Activated naive CD4-positive, alpha-beta T cell treated with anti-CD3 and anti-CD28 coated beads, Interleukin-2, amount 10 ng/mL, durations not matched to agents 7 days and 5 days (primary cell): ENCODE measurements at regions of chr11 and their contacts with region 1.

Region 1: DNA sequence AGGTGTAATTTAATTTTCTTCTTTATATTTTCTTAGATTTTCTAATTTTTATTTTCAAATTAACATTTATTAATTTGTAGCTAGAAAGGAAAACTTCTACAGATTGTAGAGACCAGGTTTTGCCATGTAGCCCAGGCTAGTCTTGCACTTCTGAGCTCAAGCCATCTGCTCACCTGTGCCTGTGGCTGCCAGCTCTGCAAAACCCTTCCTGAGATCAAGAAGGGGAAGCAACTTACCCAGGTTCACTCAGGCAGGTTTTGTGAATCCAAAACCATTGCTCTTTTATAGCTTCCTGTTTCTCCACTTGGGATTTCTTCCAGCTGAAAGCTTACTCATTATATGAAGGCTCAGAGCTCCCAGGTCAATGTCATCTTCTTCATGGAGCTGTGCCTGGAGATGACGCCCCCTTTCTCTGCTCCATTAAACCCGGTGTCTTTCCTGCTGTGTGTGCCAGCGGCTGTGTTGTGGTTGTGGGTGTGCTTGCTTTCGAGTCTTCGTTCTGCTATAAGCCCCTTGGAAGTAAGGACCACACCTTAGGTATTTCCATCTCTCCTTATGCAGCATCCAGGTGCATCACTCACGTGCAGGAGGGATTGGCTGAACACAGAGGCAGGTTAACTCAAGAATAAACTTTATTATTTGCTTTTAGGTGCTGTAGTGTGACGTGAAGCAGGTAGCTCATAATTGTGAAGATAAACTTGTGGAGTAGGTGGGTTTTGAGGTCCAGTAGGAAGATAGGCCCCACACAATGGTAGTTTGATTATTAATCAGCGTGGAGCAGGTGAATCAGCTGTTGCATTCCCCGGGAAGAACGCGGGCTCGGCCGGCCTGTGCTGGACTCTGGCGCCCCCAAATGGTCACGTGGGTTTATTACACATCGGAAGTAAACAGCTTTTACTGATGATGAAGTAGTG is 42.2 kb upstream of the INCENP start:
- DNase-seq: peak; percentile 84
- H3K4me3 Mint-ChIP-seq: no peak overlapping the region
- H3K27ac Mint-ChIP-seq: no peak overlapping the region
- H3K4me1 Mint-ChIP-seq: peaks cover 8% of the 10 kb centered on the region
- H3K27me3 Mint-ChIP-seq: peaks cover 5% of the 10 kb centered on the region

Region 2: GRCh38 chr11:61871158-61871597 is 210.5 kb before region 1 on chr11:
- CTCF ChIA-PET with region 1: interaction called, 23 read pairs
- DNase-seq: peak; percentile 78
- H3K4me3 Mint-ChIP-seq: peak overlapping the region; percentile 55
- H3K27ac Mint-ChIP-seq: no peak overlapping the region
- H3K4me1 Mint-ChIP-seq: peaks cover 3% of the 10 kb centered on the region
- H3K27me3 Mint-ChIP-seq: peaks cover 39% of the 10 kb centered on the region

Region 3: DNA sequence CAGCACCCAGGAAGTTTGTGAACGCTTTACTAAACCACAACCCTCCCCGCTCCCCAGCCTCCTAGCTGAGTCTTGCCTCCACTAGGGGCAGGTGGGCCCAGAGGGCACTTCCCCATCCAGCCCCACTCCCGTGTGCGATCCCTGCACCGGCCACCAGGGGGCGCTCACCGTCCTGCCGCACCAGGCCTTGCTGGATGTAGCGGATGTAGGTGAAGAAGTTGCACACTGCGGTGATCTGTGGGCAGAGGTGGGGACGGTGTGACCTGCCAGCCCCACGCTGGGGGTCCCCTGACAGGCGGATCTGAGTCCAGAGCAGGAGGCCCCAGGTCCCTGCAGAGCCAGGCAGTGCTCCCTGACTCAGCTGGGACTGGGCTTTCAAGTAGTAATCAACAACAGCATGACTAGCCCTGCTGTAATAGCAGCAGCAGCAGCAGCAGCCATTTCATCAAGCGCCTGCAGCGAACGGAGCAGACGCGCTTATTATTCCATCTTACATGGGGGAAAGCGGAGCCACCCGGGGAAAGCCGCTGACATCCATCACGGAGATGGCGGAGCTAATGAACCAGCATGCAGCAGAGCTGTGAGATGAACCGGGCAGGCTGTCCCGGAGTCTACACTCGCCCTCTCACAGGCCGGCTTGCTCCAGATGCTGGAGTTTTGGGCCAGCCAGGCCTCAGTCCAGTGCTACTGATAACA is 182.3 kb before region 1 on chr11:
- CTCF ChIA-PET with region 1: interaction called, 261 read pairs
- DNase-seq: peak; percentile 94
- H3K4me3 Mint-ChIP-seq: no peak overlapping the region
- H3K27ac Mint-ChIP-seq: peak overlapping the region; percentile 19
- H3K4me1 Mint-ChIP-seq: peaks cover 6% of the 10 kb centered on the region
- H3K27me3 Mint-ChIP-seq: peaks cover 16% of the 10 kb centered on the region

Region 4: DNA sequence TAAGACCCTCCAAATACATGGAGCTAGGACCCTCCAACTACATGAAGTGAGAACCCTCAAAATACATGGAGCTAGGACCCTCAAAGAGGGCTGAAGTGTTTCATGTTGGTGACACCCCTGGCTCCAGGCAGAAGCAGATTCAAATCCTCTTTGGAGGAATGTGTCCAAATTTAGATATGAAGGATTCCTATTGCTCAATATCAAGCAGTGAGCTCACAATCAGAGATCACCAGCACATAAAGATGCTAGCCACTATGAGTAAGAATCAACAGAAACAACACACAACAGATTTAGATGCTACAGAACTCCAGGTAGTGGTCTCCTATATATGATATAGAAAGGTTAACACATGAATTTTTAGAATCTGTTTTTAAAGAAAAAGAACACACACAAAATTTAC is 153.0 kb before region 1 on chr11:
- CTCF ChIA-PET with region 1: interaction called, 10 read pairs
- DNase-seq: no peak
- H3K4me3 Mint-ChIP-seq: no peak overlapping the region
- H3K27ac Mint-ChIP-seq: no peak overlapping the region
- H3K4me1 Mint-ChIP-seq: no peaks in the 10 kb centered on the region
- H3K27me3 Mint-ChIP-seq: peaks cover 45% of the 10 kb centered on the region

Region 5: DNA sequence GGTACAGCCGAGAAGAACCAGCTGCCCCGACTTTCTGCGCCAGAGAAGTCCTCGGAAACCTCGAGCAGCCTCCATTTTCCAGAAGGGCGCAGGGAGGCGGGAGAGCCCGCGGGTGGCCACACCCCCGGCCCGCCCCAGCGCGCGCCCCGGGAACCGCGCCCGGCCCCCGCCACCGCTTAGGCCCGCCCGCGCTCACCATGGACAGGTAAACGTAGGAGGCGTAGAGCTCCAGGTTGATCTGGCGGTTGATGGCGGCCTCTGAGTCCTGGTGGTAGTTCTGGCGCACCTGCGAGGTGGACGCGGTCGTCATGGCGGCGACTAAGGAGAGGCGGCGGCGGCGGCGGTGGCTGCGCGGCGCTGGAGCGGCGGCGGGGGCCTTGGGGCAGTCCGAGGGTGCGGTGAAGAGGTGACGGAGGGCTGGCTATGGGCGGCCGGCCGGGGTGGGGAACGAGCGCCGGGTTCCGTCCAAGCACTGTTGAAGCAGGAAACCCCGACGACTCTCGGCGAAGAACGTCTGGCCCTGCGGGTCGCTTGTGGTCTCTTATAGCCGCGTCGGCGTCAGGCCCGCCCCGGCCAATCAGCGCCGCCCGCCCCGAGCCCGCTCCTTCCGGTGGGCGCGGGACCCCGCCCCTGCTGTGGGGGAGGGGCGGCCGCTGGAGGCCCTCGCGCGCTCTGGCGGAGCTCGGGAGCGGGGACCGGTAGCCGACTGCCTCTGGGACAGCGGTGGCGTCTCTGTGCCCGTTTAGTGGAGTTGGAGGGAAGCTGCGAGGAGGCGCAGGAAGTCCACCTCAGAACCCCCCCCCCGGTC is 114.3 kb before region 1 on chr11 and contains the start of gene FTH1:
- CTCF ChIA-PET with region 1: interaction called, 16 read pairs
- DNase-seq: peak; percentile 88
- H3K4me3 Mint-ChIP-seq: peak within 1 kb of the TSS; percentile 92
- H3K27ac Mint-ChIP-seq: peak within 1 kb of the TSS; percentile 98
- H3K4me1 Mint-ChIP-seq: peaks cover 67% of the 10 kb centered on the region
- H3K27me3 Mint-ChIP-seq: no peaks in the 10 kb centered on the region

Region 6: DNA sequence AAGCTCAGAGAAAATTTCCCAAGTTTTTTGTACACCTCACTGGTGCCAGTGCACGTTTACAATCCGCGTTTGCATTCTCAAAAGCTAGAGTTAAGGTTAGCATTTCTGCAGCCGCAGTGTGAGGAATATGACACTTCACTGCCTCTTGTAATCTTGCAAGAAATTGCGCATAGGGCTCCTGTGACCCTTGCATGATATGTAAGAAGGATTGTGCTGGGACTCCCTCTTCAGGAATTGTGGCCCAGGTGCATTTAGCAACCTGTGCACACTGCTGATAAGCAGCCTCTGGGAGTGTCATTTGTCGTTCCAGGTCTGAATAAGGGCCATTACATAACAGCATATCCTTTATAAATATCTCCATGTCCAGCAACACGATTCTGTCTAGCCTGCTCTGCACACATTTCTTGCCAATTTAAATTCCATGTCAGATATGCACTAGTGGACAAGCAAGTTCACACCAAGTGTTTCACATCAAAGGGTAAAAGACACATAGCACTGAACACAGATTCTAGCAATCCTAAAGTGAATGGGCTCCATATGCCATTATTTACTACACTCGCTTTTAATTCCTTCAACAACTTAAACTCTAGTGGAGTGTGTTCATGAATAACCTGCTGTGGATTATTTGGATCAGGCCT is 27.0 kb before region 1 on chr11:
- CTCF ChIA-PET with region 1: interaction called, 15 read pairs
- DNase-seq: peak; percentile 50
- H3K4me3 Mint-ChIP-seq: no peak overlapping the region
- H3K27ac Mint-ChIP-seq: no peak overlapping the region
- H3K4me1 Mint-ChIP-seq: no peaks in the 10 kb centered on the region
- H3K27me3 Mint-ChIP-seq: peaks cover 13% of the 10 kb centered on the region

Region 7: GRCh38 chr11:62108017-62108750 is 26.5 kb after region 1 on chr11:
- CTCF ChIA-PET with region 1: interaction called, 113 read pairs
- DNase-seq: peak; percentile 56
- H3K4me3 Mint-ChIP-seq: no peak overlapping the region
- H3K27ac Mint-ChIP-seq: no peak overlapping the region
- H3K4me1 Mint-ChIP-seq: peaks cover 24% of the 10 kb centered on the region
- H3K27me3 Mint-ChIP-seq: peaks cover 19% of the 10 kb centered on the region